ENCODE measurements at regions of chr19 and their contacts with region 1.

Region 1: GRCh38 chr19:8158411-8159074 is 9.2 kb upstream of the FBN3 start:
- H3K4me3 Mint-ChIP-seq: no peak overlapping the region
- H3K27ac Mint-ChIP-seq: no peak overlapping the region
- H3K4me1 Mint-ChIP-seq: peaks cover 12% of the 10 kb centered on the region
- H3K27me3 Mint-ChIP-seq: peaks cover 42% of the 10 kb centered on the region

Region 2: GRCh38 chr19:7629347-7630054 is 529.0 kb before region 1 on chr19 and contains the starts of genes PET100 and XAB2:
- intact Hi-C with region 1: no loop called
- H3K4me3 Mint-ChIP-seq: peak within 1 kb of the TSS; percentile 99
- H3K27ac Mint-ChIP-seq: peak within 1 kb of the TSS; percentile 99
- H3K4me1 Mint-ChIP-seq: peaks cover 52% of the 10 kb centered on the region
- H3K27me3 Mint-ChIP-seq: no peaks in the 10 kb centered on the region

Region 3: DNA sequence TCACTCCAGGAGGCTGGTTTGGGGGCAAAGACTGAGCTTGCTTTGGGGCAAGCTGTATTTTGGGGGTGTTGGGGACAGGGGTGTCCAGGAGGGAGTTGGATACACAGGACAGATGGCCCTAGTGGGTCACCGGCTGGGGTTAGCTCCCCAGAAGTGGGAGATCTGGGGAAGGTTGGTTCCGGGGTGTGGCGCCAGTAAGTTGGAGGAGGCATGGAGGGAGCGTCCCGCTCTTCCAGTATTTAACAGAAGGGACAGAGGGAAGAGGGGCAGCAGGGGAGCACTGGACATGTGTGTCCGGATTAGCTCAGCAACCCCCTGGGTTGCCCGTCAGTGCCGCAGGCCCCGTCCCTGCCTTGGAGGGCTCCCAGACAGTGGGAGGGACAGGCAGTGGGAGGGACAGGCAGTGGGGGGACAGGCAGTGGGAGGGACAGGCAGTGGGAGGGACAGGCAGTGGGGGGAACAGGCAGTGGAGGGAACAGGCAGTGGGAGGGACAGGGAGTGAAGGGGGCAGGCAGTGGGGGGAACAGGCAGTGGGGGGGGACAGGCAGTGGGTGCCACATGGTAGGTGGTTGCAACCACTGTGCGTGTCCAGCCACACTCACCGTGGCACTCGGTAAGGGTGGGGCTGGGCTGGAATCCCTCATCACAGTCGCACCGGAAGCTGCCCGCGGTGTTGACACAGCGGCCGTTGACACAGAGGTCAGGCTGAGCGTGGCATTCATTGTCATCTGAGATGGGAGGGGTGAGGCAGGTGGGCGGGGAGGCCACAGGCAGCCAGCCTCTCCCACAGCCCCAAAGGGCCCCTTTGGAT is 72.7 kb before region 1 on chr19:
- intact Hi-C with region 1: no loop called
- H3K4me3 Mint-ChIP-seq: no peak overlapping the region
- H3K27ac Mint-ChIP-seq: no peak overlapping the region
- H3K4me1 Mint-ChIP-seq: peaks cover 6% of the 10 kb centered on the region
- H3K27me3 Mint-ChIP-seq: no peaks in the 10 kb centered on the region

Region 4: DNA sequence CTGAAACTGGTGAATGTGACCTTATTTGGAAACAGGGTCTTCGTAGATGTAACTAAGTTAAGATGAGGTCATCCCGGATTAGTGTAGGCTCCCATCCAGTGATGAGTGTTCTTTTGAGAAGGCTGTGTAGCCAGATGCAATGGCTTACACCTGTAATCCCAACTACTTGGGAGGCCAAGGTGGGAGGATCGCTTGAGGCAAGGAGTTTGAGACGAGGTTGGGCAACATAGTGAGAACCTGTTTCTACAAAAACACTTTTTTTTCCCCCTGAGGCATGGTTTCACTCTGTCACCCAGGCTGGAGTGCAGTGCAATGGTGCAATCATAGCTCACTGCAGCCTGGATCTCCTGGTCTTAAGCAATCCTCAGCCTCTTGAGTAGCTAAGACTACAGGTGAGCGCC is 45.5 kb before region 1 on chr19:
- intact Hi-C with region 1: no loop called
- H3K4me3 Mint-ChIP-seq: no peak overlapping the region
- H3K27ac Mint-ChIP-seq: no peak overlapping the region
- H3K4me1 Mint-ChIP-seq: no peaks in the 10 kb centered on the region
- H3K27me3 Mint-ChIP-seq: peaks cover 8% of the 10 kb centered on the region

Region 5: DNA sequence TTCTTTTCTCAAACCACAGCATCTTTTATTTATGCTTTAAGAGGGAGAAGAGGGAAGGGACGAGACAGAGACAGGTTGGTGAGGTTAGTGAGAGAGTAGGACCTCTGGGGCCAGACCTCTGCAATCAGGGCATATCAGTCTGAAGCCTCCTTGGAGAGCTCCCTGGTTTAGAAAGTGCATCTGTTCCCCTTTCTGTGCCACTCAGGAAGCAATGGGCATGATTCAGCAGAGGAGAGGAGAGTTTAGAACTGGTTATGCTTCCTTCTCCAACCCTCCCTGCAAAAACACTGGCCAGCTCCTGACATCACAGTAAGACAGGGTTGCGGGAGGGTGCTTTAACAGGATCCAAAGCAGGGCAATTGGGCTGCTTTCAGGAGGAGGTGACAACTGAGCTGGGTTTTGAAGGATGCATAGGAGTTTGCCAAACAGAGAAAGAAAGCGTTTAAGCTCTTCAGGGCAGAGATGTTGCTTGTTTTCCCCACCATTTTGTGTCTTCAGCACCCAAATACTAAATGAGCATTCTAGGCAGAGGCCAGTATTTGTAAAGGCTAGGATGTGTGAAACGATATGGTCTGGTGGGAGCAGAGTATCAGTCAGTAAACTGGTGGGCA is 83.8 kb after region 1 on chr19:
- intact Hi-C with region 1: no loop called
- H3K4me3 Mint-ChIP-seq: no peak overlapping the region
- H3K27ac Mint-ChIP-seq: peak overlapping the region; percentile 51
- H3K4me1 Mint-ChIP-seq: peaks cover 52% of the 10 kb centered on the region
- H3K27me3 Mint-ChIP-seq: peaks cover 47% of the 10 kb centered on the region

Region 6: DNA sequence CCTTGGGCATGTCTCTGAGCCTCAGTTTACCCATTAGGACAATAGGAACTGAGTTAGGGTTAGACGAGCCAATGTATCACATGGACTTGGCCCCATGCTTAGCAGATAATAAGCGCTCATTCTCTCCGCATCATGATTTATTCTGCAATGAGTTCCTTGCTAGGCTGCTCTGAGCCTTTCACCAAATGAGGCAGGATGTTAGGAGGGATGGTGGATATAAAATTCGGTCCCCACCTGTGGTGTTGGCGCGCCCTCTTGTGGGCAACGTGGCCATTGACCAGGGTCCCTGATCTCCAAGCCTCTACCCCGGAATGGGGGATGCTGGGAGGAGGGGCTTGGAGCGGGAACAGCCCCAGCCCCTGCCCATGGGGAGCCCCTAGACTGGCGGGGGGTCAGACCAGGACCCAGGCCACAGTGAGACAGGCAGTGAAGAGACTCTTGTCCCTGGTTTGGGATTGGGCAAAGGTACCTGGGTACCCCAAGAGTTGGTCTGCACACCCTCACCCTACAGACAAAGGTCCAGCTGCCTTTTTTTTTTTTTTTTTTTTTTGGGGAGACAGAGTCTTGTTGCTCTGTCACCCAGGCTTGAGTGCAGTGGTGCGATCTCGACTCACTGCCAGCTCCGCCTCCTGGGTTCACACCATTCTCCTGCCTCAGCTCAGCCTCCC is 94.5 kb after region 1 on chr19:
- intact Hi-C with region 1: loop called (anchors 1 kb)
- H3K4me3 Mint-ChIP-seq: no peak overlapping the region
- H3K27ac Mint-ChIP-seq: no peak overlapping the region
- H3K4me1 Mint-ChIP-seq: no peaks in the 10 kb centered on the region
- H3K27me3 Mint-ChIP-seq: peaks cover 26% of the 10 kb centered on the region

Region 7: GRCh38 chr19:8311461-8312376 is 153.2 kb after region 1 on chr19:
- intact Hi-C with region 1: loop called (anchors 10 kb)
- H3K4me3 Mint-ChIP-seq: no peak overlapping the region
- H3K27ac Mint-ChIP-seq: no peak overlapping the region
- H3K4me1 Mint-ChIP-seq: peaks cover 30% of the 10 kb centered on the region
- H3K27me3 Mint-ChIP-seq: peaks cover 12% of the 10 kb centered on the region